GM10248 (cell line): ENCODE measurements at regions of chr2 and their contacts with region 1.

Region 1: GRCh38 chr2:69755862-69756467 is 14.0 kb downstream of the ANXA4 start:
- DNase-seq: peak; percentile 36
- CTCF ChIP-seq: no peak

Region 2: GRCh38 chr2:69694894-69695849 is 60.8 kb before region 1 on chr2:
- CTCF ChIA-PET with region 1: no interaction called
- POLR2A ChIA-PET with region 1: no interaction called
- DNase-seq: no peak
- CTCF ChIP-seq: no peak

Region 3: GRCh38 chr2:69776886-69777785 is 21.2 kb after region 1 on chr2:
- CTCF ChIA-PET with region 1: no interaction called
- POLR2A ChIA-PET with region 1: no interaction called
- DNase-seq: no peak
- CTCF ChIP-seq: no peak

Region 4: GRCh38 chr2:69798909-69799526 is 43.1 kb after region 1 on chr2:
- CTCF ChIA-PET with region 1: interaction called, 3 read pairs
- POLR2A ChIA-PET with region 1: interaction called, 12 read pairs
- DNase-seq: no peak
- CTCF ChIP-seq: no peak